Activated T-helper 1 cell treated with anti-CD3 and anti-CD28 coated beads, Interleukin-12 subunit alpha, Interleukin-12 subunit beta, Interleukin-2, Interleukin-4 antibody, amounts not matched to agents 30 ng/mL and 10 ng/mL and 1 ng/mL, durations not matched to agents 14 hours and 24 hours and 36 hours (primary cell): ENCODE measurements at regions of chr2 and their contacts with region 1.

Region 1: GRCh38 chr2:24577481-24577880 is 86.4 kb downstream of the NCOA1 start:
- DNase-seq: no peak
- H3K4me3 Mint-ChIP-seq: peak overlapping the region; percentile 69
- H3K27ac Mint-ChIP-seq: peak overlapping the region; percentile 82
- H3K4me1 Mint-ChIP-seq: peaks cover 73% of the 10 kb centered on the region
- H3K27me3 Mint-ChIP-seq: no peaks in the 10 kb centered on the region

Region 2: DNA sequence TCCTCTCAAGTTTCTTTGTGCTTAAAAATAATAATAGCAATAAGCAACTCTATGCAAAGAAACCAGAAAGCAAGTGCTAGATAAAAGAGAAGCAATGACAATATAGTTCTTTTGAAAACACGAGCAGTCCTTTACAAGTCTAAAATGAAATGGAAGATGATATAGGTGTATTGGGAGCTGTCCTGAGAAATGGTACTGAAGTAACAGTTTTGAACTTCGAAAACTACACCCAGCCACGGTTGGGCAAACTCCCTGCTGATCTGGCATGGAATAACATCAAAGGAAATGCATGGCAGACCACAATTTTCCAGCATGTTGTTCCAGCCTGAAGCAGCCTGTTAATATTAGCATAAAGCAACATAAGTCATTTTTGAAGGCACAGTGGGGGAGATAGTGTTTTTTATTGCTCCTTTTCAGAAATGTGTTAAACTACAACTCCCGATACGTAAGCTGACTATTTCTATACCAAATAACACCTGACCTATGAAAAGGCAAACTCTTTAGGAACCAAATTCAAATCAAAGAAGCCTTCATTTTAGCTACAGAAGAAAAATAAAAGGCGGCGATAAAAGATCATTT is 1788.6 kb before region 1 on chr2:
- intact Hi-C with region 1: no loop called
- DNase-seq: no peak
- H3K4me3 Mint-ChIP-seq: no peak overlapping the region
- H3K27ac Mint-ChIP-seq: no peak overlapping the region
- H3K4me1 Mint-ChIP-seq: no peaks in the 10 kb centered on the region
- H3K27me3 Mint-ChIP-seq: no peaks in the 10 kb centered on the region

Region 3: GRCh38 chr2:23926750-23927571 is 650.5 kb before region 1 on chr2 and contains the start of gene ATAD2B:
- intact Hi-C with region 1: loop called (anchors 2 kb)
- DNase-seq: peak; percentile 93
- H3K4me3 Mint-ChIP-seq: peak within 1 kb of the TSS; percentile 95
- H3K27ac Mint-ChIP-seq: peak within 1 kb of the TSS; percentile 99
- H3K4me1 Mint-ChIP-seq: peaks cover 40% of the 10 kb centered on the region
- H3K27me3 Mint-ChIP-seq: peaks cover 2% of the 10 kb centered on the region
- total RNA-seq, gene ATAD2B: 25.9 and 27.8 TPM in 2 replicates

Region 4: DNA sequence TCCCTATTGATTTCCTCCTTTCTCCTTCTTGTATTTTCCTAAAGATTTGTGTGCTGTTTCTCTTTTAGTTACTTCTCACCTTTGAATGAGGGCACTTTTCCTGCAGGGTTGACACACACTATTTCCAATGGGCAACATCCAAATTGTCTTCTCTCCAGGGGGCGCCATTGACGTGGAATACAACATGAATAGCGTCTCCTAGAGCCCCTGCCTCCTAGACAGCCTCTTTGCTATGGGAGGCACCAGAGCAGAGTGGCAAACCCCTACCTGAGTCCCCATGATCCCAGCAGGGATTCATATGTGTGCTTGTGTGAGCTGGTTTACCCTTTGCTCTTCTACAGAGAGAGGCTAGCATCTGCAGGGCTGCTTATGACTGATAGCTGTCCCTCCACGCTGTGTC is 155.8 kb before region 1 on chr2:
- intact Hi-C with region 1: loop called (anchors 5 kb)
- DNase-seq: peak; percentile 27
- H3K4me3 Mint-ChIP-seq: no peak overlapping the region
- H3K27ac Mint-ChIP-seq: no peak overlapping the region
- H3K4me1 Mint-ChIP-seq: no peaks in the 10 kb centered on the region
- H3K27me3 Mint-ChIP-seq: peaks cover 9% of the 10 kb centered on the region

Region 5: DNA sequence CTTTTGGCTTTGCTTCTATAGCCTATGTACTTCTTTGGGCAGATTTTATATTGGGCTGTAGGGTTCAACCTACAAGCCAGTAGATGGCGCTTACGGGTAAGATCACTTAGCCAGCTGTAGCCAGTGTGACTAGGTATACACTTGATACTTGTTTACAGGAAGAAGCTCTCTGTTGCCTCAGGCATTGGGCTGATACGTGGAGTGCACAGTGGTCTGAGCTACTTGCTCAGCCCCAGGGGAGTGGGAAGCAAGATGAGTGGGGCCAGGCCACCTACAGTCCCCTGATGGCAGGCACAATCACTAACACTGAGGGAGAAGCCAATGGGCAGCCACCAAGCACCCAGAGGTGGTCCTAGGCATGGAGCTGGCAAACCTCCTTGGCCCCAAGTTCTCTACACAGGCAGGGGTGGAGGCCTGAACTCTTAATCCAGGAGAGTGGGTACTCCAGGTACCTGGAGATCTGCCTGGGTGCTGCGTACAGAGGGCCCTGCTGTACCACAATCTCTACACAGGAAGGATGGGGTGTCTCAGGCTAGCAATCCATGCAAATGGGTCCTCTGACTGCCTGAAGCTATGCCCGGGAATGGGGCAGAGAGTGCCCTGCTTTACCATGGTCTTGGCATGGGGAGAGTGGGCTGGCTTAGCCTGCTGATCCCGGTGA is 35.8 kb after region 1 on chr2:
- intact Hi-C with region 1: loop called (anchors 5 kb)
- DNase-seq: peak; percentile 32
- H3K4me3 Mint-ChIP-seq: no peak overlapping the region
- H3K27ac Mint-ChIP-seq: peak overlapping the region; percentile 81
- H3K4me1 Mint-ChIP-seq: peaks cover 7% of the 10 kb centered on the region
- H3K27me3 Mint-ChIP-seq: no peaks in the 10 kb centered on the region

Region 6: DNA sequence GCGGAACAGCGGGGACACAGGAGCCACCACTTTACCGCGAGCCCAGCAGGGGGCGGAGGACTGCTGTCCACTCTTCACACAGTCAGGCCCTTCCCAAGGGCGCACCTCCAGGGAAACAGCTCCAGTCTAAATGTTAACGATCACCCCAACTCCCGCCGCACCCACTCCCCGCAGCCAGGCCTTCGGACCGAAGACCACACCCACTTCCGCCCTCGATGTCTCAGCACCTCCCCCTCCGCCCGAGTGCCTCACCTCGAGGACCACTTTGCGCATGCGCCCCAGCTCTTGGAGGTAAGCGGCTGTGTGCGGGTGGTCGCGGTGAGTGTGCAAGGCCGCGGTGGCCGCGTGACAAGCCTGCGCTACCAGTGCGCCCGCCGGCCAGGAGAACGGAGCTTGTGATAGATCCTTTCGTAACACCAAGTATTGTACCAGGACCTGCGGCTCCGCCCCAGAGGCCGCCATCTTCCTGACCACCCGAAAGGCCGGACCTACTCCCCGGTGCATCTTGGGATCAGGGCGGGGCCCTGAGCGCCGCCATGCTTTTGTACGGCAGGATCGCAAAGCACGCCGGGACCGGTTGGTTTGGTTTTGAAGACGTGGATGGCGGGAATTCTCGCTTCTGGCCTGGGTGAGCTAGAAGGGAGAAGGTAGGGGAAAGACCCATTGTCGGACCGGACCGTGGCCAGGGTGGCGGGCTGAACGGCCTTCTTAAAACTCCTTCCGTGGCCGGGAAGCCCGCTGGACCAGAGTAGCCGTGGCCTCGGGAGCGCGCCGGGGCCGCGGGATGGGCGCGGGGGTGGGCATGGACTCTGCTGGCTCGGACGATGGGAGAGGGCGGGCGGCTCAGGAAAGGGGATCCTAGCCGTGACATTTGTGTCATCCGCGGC is 215.6 kb after region 1 on chr2 and contains the starts of genes CENPO and PTRHD1:
- intact Hi-C with region 1: loop called (anchors 2 kb)
- DNase-seq: peak; percentile 92
- H3K4me3 Mint-ChIP-seq: peak within 1 kb of the TSS; percentile 95
- H3K27ac Mint-ChIP-seq: peak within 1 kb of the TSS; percentile 99
- H3K4me1 Mint-ChIP-seq: peaks cover 47% of the 10 kb centered on the region
- H3K27me3 Mint-ChIP-seq: peaks cover 1% of the 10 kb centered on the region
- total RNA-seq, gene CENPO: 44.7 and 48.3 TPM in 2 replicates
- total RNA-seq, gene PTRHD1: 16.5 and 17.3 TPM in 2 replicates

Region 7: DNA sequence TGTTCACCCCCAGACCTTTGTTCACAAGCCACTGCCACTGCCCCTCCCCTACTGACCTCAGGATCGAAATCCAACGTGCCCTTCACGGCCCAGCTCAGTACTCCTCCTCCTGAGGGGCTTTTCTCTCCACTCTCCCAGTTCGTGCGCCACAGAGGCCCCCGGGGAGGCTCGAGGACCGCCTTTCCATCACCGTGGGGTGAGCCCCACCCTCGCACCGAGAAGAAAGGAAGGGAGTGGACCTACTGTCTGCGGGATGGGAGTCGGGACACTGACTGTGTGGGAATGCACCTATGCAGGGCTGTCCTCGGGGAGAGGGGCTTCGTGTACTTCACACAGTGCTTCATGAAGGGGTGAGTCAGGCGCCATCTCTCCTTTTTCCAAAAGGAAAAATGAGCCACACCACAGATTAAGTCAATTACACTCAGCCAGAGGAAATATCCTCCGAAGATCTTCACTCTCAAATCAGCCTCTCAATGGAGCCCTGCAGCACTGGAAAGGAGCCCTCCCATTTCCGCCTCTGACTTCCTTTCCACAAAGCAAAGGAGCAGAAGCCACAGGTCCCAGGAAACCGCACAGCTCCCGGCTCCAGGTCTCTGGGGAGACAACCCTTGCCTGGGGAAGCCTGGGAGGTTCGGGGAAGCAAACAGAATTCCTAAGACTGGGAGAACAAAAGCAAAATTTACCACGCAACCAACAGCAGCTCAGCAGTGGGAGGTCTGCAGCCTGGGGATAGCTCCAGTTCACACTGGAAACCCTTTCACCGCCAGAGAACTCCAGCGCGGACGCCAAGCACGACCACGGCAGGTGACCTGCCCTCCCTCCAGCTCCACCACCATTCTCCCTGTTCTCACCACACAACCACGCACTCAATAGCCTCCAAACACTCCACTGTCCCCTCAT is 320.9 kb after region 1 on chr2:
- intact Hi-C with region 1: no loop called
- DNase-seq: no peak
- H3K4me3 Mint-ChIP-seq: no peak overlapping the region
- H3K27ac Mint-ChIP-seq: no peak overlapping the region
- H3K4me1 Mint-ChIP-seq: no peaks in the 10 kb centered on the region
- H3K27me3 Mint-ChIP-seq: no peaks in the 10 kb centered on the region

Region 8: GRCh38 chr2:25586726-25587144 is 1009.3 kb after region 1 on chr2:
- intact Hi-C with region 1: loop called (anchors 5 kb)
- DNase-seq: no peak
- H3K4me3 Mint-ChIP-seq: peak overlapping the region; percentile 71
- H3K27ac Mint-ChIP-seq: peak overlapping the region; percentile 92
- H3K4me1 Mint-ChIP-seq: peaks cover 27% of the 10 kb centered on the region
- H3K27me3 Mint-ChIP-seq: no peaks in the 10 kb centered on the region